ENCODE measurements at regions of chr6 and their contacts with region 1.

Region 1: GRCh38 chr6:35710241-35710847 is 21.6 kb upstream of the FKBP5 start:
- DNase-seq: peak in 1 of 2 experiments; percentile 63
- H3K4me3 ChIP-seq: no peak overlapping the region
- H3K27ac ChIP-seq: no peak overlapping the region
- H3K4me1 ChIP-seq: no peaks in the 10 kb centered on the region
- H3K27me3 ChIP-seq: no peaks in the 10 kb centered on the region
- CTCF ChIP-seq: no peak

Region 2: GRCh38 chr6:34718867-34719455 is 991.4 kb before region 1 on chr6:
- CTCF ChIA-PET with region 1: interaction called, 13 read pairs
- POLR2A ChIA-PET with region 1: no interaction called
- intact Hi-C with region 1: no loop called
- DNase-seq: no peak
- H3K4me3 ChIP-seq: no peak overlapping the region; the same call in 1 of the 2 replicates
- H3K27ac ChIP-seq: peak overlapping the region; percentile 73
- H3K4me1 ChIP-seq: peaks cover 45% of the 10 kb centered on the region
- H3K27me3 ChIP-seq: no peaks in the 10 kb centered on the region
- CTCF ChIP-seq: no peak

Region 3: GRCh38 chr6:35607517-35608233 is 102.7 kb before region 1 on chr6:
- CTCF ChIA-PET with region 1: no interaction called
- POLR2A ChIA-PET with region 1: interaction called, 11 read pairs
- intact Hi-C with region 1: no loop called
- DNase-seq: no peak
- H3K4me3 ChIP-seq: no peak overlapping the region
- H3K27ac ChIP-seq: no peak overlapping the region
- H3K4me1 ChIP-seq: peaks cover 29% of the 10 kb centered on the region
- H3K27me3 ChIP-seq: no peaks in the 10 kb centered on the region
- CTCF ChIP-seq: no peak

Region 4: GRCh38 chr6:35642471-35643161 is 67.7 kb before region 1 on chr6:
- CTCF ChIA-PET with region 1: no interaction called
- POLR2A ChIA-PET with region 1: no interaction called
- intact Hi-C with region 1: no loop called
- DNase-seq: no peak
- H3K4me3 ChIP-seq: no peak overlapping the region
- H3K27ac ChIP-seq: no peak overlapping the region
- H3K4me1 ChIP-seq: no peaks in the 10 kb centered on the region
- H3K27me3 ChIP-seq: no peaks in the 10 kb centered on the region
- CTCF ChIP-seq: no peak